BJ (cell line): ENCODE measurements at regions of chr4 and their contacts with region 1.

Region 1: GRCh38 chr4:169337510-169337909 is 66.8 kb upstream of the SH3RF1 start:
- DNase-seq: peak; percentile 92
- H3K4me3 ChIP-seq: no peak overlapping the region
- H3K27me3 ChIP-seq: no peaks in the 10 kb centered on the region
- CTCF ChIP-seq: no peak

Region 2: GRCh38 chr4:169229571-169230028 is 107.9 kb before region 1 on chr4:
- CTCF ChIA-PET with region 1: no interaction called
- POLR2A ChIA-PET with region 1: interaction called, 29 read pairs
- DNase-seq: peak; percentile 87
- H3K4me3 ChIP-seq: no peak overlapping the region
- H3K27me3 ChIP-seq: no peaks in the 10 kb centered on the region
- CTCF ChIP-seq: no peak

Region 3: DNA sequence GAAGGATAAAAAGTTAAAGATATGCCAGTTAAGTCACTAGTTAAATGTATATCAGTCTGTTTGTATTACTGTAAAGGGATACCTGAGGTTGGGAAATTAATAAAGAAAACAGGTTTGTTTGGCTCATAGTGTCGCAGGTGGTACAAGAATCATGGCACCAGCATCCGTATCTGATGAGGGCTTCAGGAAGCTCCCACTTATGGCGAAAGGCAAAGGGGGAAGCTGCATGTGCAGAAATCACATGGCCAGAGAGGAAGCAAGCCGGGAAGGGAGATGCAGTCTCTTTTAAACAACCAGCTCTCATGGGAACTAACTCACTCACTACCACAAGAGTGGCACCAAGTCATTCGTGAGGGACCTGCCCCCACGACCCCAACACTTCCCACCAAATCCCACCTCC is 25.1 kb after region 1 on chr4:
- CTCF ChIA-PET with region 1: no interaction called
- POLR2A ChIA-PET with region 1: interaction called, 16 read pairs
- DNase-seq: no peak
- H3K4me3 ChIP-seq: no peak overlapping the region
- H3K27me3 ChIP-seq: no peaks in the 10 kb centered on the region
- CTCF ChIP-seq: no peak